Mammary epithelial cell (primary cell): ENCODE measurements at regions of chr6 and their contacts with region 1.

Region 1: DNA sequence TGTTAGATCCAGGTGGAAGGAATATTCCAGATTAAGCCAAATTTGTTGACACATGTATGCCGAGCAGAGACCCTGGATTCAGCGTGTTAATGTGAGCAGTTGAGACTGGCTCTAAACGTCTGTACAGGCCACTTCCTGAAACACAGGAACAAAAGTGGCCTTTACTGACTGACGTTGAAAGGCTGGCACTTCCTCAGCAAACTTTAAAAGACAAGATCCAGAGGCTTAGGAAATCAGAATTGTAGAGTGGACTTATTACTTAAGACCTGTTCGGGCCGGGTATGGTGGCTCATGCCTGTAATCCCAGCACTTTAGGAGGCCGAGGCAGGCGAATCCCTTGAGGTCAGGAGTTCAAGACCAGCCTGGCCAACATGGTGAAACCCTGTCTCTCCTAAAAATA is 125.7 kb upstream of the ARID1B start:
- DNase-seq: no peak
- H3K4me3 ChIP-seq: no peak overlapping the region
- H3K27ac ChIP-seq: no peak overlapping the region
- H3K4me1 ChIP-seq: no peaks in the 10 kb centered on the region
- H3K27me3 ChIP-seq: no peaks in the 10 kb centered on the region
- CTCF ChIP-seq: no peak

Region 2: DNA sequence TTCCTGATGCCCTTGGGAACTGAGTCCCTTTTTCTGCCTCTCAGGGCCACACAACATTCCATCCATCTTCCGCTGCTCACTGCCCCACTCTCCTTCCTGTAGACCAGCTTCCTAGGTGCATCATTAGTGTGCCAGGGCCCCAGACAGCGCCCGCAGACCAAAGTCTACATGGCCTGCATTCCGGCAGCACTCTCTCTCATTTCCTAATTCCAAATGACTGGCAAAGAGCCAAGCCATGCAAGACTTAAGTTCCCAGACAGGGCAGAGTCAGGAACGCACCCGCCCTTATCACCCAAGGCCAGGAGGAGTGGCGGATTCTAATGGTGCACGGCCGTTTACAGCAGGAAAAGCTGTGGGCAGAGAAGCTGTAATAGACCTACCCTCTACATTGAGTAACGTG is 34.1 kb before region 1 on chr6:
- CTCF ChIA-PET with region 1: no interaction called
- dilution Hi-C with region 1: loop called (anchors 5 kb)
- in situ Hi-C with region 1: no loop called
- intact Hi-C with region 1: no loop called
- DNase-seq: no peak
- H3K4me3 ChIP-seq: no peak overlapping the region
- H3K27ac ChIP-seq: no peak overlapping the region
- H3K4me1 ChIP-seq: no peaks in the 10 kb centered on the region
- H3K27me3 ChIP-seq: peaks cover 2% of the 10 kb centered on the region
- CTCF ChIP-seq: no peak